Caco-2 (cell line): ENCODE measurements at regions of chr9 and their contacts with region 1.

Region 1: GRCh38 chr9:121399883-121400607 is 30.0 kb upstream of the STOM start:
- DNase-seq: peak in 1 of 2 experiments; percentile 54
- H3K4me3 ChIP-seq: no peak overlapping the region
- H3K4me3 Mint-ChIP-seq: no peak overlapping the region
- H3K27ac Mint-ChIP-seq: no peak overlapping the region
- H3K4me1 ChIP-seq: no peaks in the 10 kb centered on the region
- H3K4me1 Mint-ChIP-seq: no peaks in the 10 kb centered on the region
- H3K27me3 ChIP-seq: no peaks in the 10 kb centered on the region
- H3K27me3 Mint-ChIP-seq: no peaks in the 10 kb centered on the region
- CTCF ChIP-seq: peak; percentile 29 to 36

Region 2: GRCh38 chr9:121278535-121279261 is 121.3 kb before region 1 on chr9:
- CTCF ChIA-PET with region 1: interaction called, 6 read pairs
- POLR2A ChIA-PET with region 1: no interaction called
- intact Hi-C with region 1: loop called (anchors 1 kb)
- DNase-seq: peak; percentile 70 to 72
- H3K4me3 ChIP-seq: no peak overlapping the region
- H3K4me3 Mint-ChIP-seq: peak overlapping the region; percentile 50
- H3K27ac Mint-ChIP-seq: peak overlapping the region; percentile 79
- H3K4me1 ChIP-seq: peaks cover 34% of the 10 kb centered on the region
- H3K4me1 Mint-ChIP-seq: peaks cover 37% of the 10 kb centered on the region
- H3K27me3 ChIP-seq: no peaks in the 10 kb centered on the region
- H3K27me3 Mint-ChIP-seq: no peaks in the 10 kb centered on the region
- CTCF ChIP-seq: peak; percentile 84 to 88

Region 3: GRCh38 chr9:121350993-121351561 is 49.0 kb before region 1 on chr9:
- CTCF ChIA-PET with region 1: no interaction called
- POLR2A ChIA-PET with region 1: no interaction called
- intact Hi-C with region 1: no loop called
- DNase-seq: no peak
- H3K4me3 ChIP-seq: no peak overlapping the region
- H3K4me3 Mint-ChIP-seq: no peak overlapping the region
- H3K27ac Mint-ChIP-seq: no peak overlapping the region
- H3K4me1 ChIP-seq: no peaks in the 10 kb centered on the region
- H3K4me1 Mint-ChIP-seq: peaks cover 9% of the 10 kb centered on the region
- H3K27me3 ChIP-seq: no peaks in the 10 kb centered on the region
- H3K27me3 Mint-ChIP-seq: no peaks in the 10 kb centered on the region
- CTCF ChIP-seq: no peak

Region 4: GRCh38 chr9:121376214-121376830 is 23.7 kb before region 1 on chr9:
- CTCF ChIA-PET with region 1: interaction called, 3 read pairs
- POLR2A ChIA-PET with region 1: no interaction called
- intact Hi-C with region 1: loop called (anchors 1 kb)
- DNase-seq: no peak
- H3K4me3 ChIP-seq: no peak overlapping the region
- H3K4me3 Mint-ChIP-seq: no peak overlapping the region
- H3K27ac Mint-ChIP-seq: no peak overlapping the region
- H3K4me1 ChIP-seq: peaks cover 36% of the 10 kb centered on the region
- H3K4me1 Mint-ChIP-seq: peaks cover 30% of the 10 kb centered on the region
- H3K27me3 ChIP-seq: no peaks in the 10 kb centered on the region
- H3K27me3 Mint-ChIP-seq: no peaks in the 10 kb centered on the region
- CTCF ChIP-seq: peak in 1 of 2 experiments; percentile 28

Region 5: DNA sequence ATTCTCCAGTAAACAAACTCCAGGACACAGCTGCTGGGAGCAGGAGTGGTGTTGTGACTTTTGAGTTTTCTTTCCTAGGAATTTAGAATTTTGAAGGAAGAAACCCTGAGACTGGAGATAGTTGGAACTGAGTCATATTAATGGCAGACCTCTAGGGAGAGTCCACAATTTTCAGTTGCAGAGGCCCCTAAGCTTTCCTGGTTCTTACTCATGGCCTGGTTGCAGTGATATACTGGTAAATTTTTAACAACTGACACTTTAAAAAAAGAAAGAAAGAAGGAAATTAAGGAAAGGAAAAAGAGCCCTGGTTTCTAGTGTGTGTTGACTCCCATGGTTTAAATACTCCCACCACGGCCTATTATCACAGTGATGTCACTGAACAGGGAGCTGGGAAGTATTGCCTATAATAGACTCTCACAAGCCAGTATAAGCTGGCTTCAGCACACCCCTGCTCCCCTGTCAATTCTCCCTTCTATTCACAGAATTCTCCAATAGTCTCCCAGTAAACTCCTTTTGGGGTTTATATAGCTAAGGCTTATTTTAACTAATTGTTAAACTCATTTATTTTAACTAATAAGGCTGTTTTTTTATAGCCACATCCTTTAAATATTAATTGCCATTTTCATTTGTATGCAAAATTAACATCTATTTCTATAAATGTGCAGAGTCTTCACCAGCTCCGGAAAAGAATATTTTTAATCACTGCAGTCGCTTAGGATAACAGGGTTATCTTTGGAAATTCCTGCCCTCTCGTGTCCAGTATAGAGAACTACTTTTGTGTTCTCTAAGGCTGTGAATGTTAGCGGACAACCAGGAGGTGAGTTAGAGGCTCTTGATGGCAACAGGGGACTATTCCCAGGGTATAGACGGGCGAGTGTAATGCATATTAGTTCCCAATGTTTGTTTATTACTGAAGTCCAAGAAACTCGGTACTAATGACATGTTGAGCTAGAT is 39.9 kb after region 1 on chr9:
- CTCF ChIA-PET with region 1: no interaction called
- POLR2A ChIA-PET with region 1: no interaction called
- intact Hi-C with region 1: loop called (anchors 1 kb)
- DNase-seq: peak in 1 of 2 experiments; percentile 20
- H3K4me3 ChIP-seq: no peak overlapping the region
- H3K4me3 Mint-ChIP-seq: no peak overlapping the region
- H3K27ac Mint-ChIP-seq: no peak overlapping the region
- H3K4me1 ChIP-seq: no peaks in the 10 kb centered on the region
- H3K4me1 Mint-ChIP-seq: no peaks in the 10 kb centered on the region
- H3K27me3 ChIP-seq: no peaks in the 10 kb centered on the region
- H3K27me3 Mint-ChIP-seq: no peaks in the 10 kb centered on the region
- CTCF ChIP-seq: peak; percentile 29 to 48